PC-3 (cell line): ENCODE measurements at regions of chr22 and their contacts with region 1.

Region 1: DNA sequence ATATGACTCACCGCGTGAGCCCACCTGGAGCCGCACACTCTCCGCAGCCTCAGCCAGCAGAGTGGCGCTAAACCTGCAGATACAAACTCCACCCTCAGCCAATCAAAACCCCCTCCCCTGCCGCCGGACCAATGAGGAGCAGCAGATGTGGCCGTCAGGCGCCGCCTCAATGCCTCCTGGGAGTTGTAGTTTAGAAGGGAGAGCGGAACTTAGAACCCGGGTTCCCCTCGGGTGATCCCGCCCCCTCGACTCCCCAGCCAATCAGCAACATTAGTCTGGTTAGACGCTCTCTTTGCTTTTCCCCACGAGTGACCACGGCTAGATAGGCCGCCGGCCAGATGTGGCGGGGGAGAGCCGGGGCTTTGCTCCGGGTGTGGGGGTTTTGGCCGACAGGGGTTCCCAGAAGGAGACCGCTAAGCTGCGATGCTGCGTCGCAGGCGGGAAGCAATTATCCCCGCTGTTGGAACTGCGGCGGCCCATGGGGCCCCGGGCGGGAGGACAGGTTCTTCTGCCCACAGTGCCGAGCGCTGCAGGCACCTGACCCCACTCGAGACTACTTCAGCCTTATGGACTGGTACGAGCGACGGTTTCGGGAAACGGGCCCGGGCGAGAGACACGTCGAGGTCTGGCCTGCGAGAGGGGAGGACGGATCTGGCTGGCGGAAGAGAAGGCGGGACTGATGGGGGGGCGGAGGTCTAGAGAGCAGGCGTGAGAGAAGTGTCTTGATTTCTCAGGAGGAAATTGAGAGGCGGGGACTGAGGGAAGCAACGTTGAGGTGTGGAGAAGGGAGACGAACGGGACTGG is at the starts of genes CHEK2 and HSCB:
- DNase-seq: peak; percentile 96
- ATAC-seq: peak; percentile 91
- H3K4me3 ChIP-seq: peak within 1 kb of the TSS; percentile 81
- H3K27ac ChIP-seq: peak within 1 kb of the TSS; percentile 66
- H3K4me1 ChIP-seq: peaks cover 7% of the 10 kb centered on the region
- H3K27me3 ChIP-seq: no peaks in the 10 kb centered on the region
- CTCF ChIP-seq: 0 out of 2 replicates have a peak, but pooled peaks have one; percentile 21
- total RNA-seq, gene CHEK2: 21.0 and 23.7 TPM in 2 replicates
- total RNA-seq, gene HSCB: 13.9 and 14.1 TPM in 2 replicates

Region 2: GRCh38 chr22:28600546-28601143 is 141.3 kb before region 1 on chr22:
- CTCF ChIA-PET with region 1: no interaction called
- POLR2A ChIA-PET with region 1: no interaction called
- intact Hi-C with region 1: no loop called
- DNase-seq: peak; percentile 70
- ATAC-seq: 0 out of 2 replicates have a peak, but pooled peaks have one; percentile 22
- H3K4me3 ChIP-seq: no peak overlapping the region
- H3K27ac ChIP-seq: no peak overlapping the region
- H3K4me1 ChIP-seq: peaks cover 10% of the 10 kb centered on the region; the same call in 1 of the 2 replicates
- H3K27me3 ChIP-seq: no peaks in the 10 kb centered on the region
- CTCF ChIP-seq: peak; percentile 66

Region 3: DNA sequence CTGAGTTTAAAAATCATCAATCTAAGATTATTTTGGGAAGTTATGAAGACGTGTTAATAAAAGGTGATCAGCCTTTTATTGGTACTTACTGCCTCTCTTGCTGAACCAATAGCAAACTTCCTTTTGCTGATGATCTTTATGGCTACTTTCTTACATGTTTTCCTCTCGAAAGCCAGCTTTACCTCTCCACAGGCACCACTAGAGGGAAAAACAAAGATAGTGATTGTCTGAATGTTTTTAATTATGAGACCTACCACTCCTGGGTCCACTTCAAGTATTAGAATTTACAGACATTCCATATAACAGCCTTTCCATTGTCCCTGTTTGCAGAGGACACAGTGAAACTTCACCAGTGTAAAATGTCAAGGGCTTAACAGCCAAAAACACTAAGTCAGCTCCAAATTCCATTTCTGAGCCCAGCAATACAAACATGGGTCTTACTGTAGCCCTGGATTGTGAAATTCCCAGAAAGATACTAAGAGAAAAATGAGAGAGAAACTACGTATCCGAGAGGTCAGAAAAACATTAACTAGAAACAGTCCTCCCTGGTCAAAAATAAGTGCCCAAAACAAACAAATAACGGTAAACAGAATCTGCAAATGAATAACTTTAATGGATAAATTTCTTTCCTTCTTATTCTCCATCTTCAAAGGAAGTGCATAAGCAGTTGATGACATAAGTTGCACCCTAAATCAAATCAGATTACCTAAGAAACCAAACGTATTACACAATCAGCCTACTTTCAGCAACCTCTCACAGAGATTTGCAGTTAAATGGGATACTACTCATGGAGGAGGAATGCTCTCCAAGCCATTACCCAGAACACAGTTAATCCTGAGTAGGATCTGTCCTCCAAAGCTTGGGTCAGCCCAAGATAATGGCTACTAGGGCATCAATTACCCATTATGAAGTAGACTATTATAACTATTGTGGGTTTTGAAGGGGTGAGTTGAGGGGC is 29.9 kb before region 1 on chr22:
- CTCF ChIA-PET with region 1: no interaction called
- POLR2A ChIA-PET with region 1: no interaction called
- intact Hi-C with region 1: loop called (anchors 2 kb)
- DNase-seq: peak; percentile 64
- ATAC-seq: no peak
- H3K4me3 ChIP-seq: no peak overlapping the region
- H3K27ac ChIP-seq: no peak overlapping the region
- H3K4me1 ChIP-seq: peaks cover 34% of the 10 kb centered on the region
- H3K27me3 ChIP-seq: no peaks in the 10 kb centered on the region
- CTCF ChIP-seq: no peak